Activated CD4-positive, alpha-beta T cell treated with anti-CD3 and anti-CD28 coated beads for 36 hours (primary cell): ENCODE measurements at regions of chr16 and their contacts with region 1.

Region 1: DNA sequence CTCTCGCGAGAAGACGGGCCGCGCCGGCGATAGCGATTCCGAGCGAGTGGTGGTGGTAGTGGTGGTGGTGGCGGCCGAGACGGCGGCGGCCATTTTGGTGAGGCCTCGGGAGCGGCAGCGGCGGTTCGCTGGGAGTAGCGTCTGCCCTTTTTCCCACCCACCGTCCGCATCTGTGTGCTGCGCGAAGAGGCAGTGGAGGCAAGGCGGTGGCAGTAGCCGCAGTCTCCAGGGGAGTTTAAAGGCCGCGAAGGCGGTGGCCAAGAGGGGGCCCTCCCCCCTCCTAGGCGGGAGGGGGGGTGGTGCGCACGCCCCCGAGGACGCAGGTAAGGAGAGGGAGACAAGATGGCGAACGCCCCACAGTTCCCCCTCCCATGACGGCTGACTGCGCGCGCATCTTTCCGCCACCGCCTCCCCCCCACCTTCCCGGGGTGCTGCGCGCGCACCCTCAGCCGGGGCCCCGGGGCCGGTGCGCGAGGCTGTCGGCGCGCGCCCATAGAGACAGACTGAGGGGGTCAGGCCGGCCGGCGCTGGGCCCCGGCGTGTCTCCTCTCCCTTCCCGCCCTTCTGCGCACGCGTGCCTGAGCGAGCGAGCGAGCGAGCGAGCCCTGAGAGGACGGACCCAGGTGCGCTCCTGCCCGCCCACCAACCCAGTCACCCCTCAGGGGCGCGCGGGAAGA is 694 bp upstream of the SRCAP start:
- DNase-seq: peak; percentile 100
- ATAC-seq: peak; percentile 75
- H3K4me3 Mint-ChIP-seq: peak overlapping the region; percentile 96
- H3K27ac Mint-ChIP-seq: peak overlapping the region; percentile 99
- H3K4me1 Mint-ChIP-seq: peaks cover 33% of the 10 kb centered on the region
- H3K27me3 Mint-ChIP-seq: no peaks in the 10 kb centered on the region

Region 2: DNA sequence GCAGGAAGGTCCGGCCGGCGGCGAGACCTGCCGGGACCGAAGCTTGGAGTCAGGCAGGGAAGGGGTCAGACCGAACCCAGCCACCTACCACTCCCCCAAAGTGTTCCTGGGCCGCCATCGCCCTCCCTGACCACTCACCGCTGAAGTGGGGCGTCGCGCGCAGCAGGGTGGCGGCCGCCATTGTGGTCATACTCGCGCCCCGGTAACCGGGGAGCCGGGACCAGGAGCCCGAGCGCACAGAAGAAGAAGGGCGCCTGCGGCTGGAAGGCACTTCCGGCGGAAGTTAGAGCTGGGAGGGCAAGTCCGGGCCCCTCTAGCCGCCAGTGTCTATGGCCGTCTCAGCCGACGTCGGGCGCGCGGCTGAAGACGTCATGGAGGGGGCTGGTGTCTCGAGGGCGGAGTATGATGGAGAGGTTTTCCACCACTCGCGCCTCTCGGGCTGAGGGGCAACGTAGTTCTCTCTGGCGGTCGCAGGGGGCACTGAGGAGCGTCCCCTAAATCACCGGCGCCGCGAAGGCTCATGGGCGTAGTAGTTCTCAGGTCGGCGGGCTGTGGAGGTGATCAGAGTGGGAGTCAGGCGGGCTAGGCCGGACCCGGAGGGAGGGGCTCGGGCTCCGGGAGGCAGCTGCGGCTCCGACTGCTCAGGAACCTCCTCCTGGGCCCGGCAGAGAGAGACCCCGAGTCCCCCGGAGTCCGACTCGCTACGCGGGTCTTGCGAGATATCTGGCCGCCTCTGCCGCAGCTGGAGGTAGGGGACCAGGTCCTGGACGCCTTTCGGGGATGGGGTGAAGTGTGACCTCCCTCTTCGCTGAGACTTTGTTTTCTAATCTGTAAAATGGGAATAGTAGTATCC is 1852.0 kb before region 1 on chr16 and contains the start of gene TUFM:
- CTCF ChIA-PET with region 1: no interaction called
- POLR2A ChIA-PET with region 1: no interaction called
- intact Hi-C with region 1: no loop called
- DNase-seq: peak; percentile 99
- ATAC-seq: peak; percentile 94
- H3K4me3 Mint-ChIP-seq: peak within 1 kb of the TSS; percentile 97
- H3K27ac Mint-ChIP-seq: peak within 1 kb of the TSS; percentile 97
- H3K4me1 Mint-ChIP-seq: peaks cover 23% of the 10 kb centered on the region
- H3K27me3 Mint-ChIP-seq: no peaks in the 10 kb centered on the region
- total RNA-seq, gene TUFM: 224 to 241 TPM

Region 3: DNA sequence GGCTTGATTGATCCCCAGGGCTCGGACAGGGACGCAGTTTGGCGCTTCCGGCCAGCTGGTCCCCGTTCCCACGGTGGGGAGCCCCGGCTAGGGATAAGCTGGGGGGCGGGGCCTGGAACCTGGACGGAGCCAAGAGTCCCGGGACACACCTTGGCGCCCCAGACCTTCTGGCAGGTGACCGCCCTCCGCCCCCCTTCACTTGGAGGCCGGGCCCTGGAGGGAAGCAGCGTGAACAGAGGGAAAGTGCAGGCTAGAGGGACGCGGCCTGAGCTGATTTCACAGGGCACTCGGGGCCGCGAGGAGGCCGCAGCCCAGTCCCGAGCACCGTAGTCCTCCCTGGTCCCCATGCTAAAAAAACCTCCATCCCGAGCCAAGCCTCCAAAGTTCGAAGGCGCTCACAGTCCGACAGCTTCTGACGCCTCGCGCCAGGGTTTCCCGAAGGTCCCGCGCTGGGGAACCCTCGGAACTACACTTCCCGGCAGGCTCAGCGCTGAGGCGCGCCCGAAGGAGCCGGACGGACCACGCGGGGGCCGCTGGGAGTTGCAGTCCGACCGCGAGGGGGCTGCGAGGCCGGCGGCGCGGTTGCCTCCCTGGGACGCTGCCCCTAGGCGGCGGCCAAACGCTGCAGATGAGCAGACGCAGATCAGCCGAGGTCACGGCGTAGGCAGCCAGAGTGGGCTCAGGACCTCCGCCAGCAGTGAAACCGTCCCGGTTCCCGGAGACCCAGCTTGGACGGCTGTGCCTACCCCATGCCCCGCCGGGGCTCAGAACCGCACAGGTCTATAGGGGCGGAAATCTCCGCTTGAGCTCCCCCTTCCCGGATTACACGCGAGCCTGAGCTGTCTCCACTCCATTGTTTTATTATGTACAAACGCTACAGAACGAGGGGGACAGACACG is 606.6 kb before region 1 on chr16 and contains the start of gene TBX6:
- CTCF ChIA-PET with region 1: interaction called, 3 read pairs
- POLR2A ChIA-PET with region 1: no interaction called
- intact Hi-C with region 1: loop called in 1 of 2 experiments (anchors 5 kb)
- DNase-seq: peak; percentile 97
- ATAC-seq: peak; percentile 83
- H3K4me3 Mint-ChIP-seq: peak within 1 kb of the TSS; percentile 84
- H3K27ac Mint-ChIP-seq: peak within 1 kb of the TSS; percentile 92
- H3K4me1 Mint-ChIP-seq: peaks cover 51% of the 10 kb centered on the region
- H3K27me3 Mint-ChIP-seq: no peaks in the 10 kb centered on the region
- total RNA-seq, gene TBX6: 2.7 to 3.0 TPM

Region 4: DNA sequence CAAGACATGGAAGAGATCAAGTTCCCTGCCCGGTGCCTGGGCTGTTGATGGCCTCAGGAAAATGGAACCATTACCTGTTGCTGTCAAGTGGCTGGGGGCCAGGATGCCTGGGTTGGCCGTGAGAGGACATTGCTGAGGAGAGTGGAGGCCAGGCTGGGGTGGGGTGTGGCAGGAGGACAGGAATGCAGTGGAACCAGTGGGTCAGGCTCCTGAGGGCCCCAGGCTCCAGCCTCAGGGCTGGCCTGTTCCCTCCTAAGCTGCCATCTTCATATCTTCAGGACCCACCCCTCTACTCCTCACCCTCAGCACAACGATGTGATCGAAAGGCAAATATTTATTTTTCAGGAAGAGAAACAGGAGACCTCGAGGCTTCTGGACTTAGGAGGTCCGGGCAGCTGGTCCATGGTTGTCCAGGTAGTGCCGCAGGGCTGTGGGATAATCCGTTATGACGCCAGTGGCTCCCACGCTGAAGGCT is 593.7 kb before region 1 on chr16:
- CTCF ChIA-PET with region 1: no interaction called
- POLR2A ChIA-PET with region 1: no interaction called
- intact Hi-C with region 1: no loop called
- DNase-seq: no peak
- ATAC-seq: no peak
- H3K4me3 Mint-ChIP-seq: no peak overlapping the region
- H3K27ac Mint-ChIP-seq: peak overlapping the region; percentile 72
- H3K4me1 Mint-ChIP-seq: no peaks in the 10 kb centered on the region
- H3K27me3 Mint-ChIP-seq: no peaks in the 10 kb centered on the region

Region 5: GRCh38 chr16:30472328-30472942 is 225.8 kb before region 1 on chr16 and contains the start of gene ITGAL:
- CTCF ChIA-PET with region 1: no interaction called
- POLR2A ChIA-PET with region 1: interaction called, 3 read pairs
- intact Hi-C with region 1: loop called in 1 of 2 experiments (anchors 1 kb)
- DNase-seq: peak; percentile 93
- ATAC-seq: peak; percentile 62
- H3K4me3 Mint-ChIP-seq: peak within 1 kb of the TSS; percentile 95
- H3K27ac Mint-ChIP-seq: peak within 1 kb of the TSS; percentile 99
- H3K4me1 Mint-ChIP-seq: peaks cover 63% of the 10 kb centered on the region
- H3K27me3 Mint-ChIP-seq: no peaks in the 10 kb centered on the region
- total RNA-seq, gene ITGAL: 210 to 222 TPM

Region 6: GRCh38 chr16:30609926-30610839 is 88.1 kb before region 1 on chr16 and contains the start of gene ZNF689:
- CTCF ChIA-PET with region 1: interaction called, 3 read pairs
- POLR2A ChIA-PET with region 1: interaction called, 3 read pairs
- intact Hi-C with region 1: loop called in 1 of 2 experiments (anchors 1 kb)
- DNase-seq: peak; percentile 96
- ATAC-seq: peak; percentile 88
- H3K4me3 Mint-ChIP-seq: peak within 1 kb of the TSS; percentile 80
- H3K27ac Mint-ChIP-seq: peak within 1 kb of the TSS; percentile 96
- H3K4me1 Mint-ChIP-seq: peaks cover 19% of the 10 kb centered on the region
- H3K27me3 Mint-ChIP-seq: no peaks in the 10 kb centered on the region
- total RNA-seq, gene ZNF689: 9.0 to 10.7 TPM

Region 7: GRCh38 chr16:30761928-30762810 is 63.9 kb after region 1 on chr16 and contains the starts of genes CFAP119 and RNF40:
- CTCF ChIA-PET with region 1: interaction called, 5 read pairs
- POLR2A ChIA-PET with region 1: no interaction called
- intact Hi-C with region 1: loop called in 1 of 2 experiments (anchors 1 kb)
- DNase-seq: peak; percentile 94
- ATAC-seq: peak; percentile 98
- H3K4me3 Mint-ChIP-seq: peak within 1 kb of the TSS; percentile 90
- H3K27ac Mint-ChIP-seq: peak within 1 kb of the TSS; percentile 83
- H3K4me1 Mint-ChIP-seq: peaks cover 25% of the 10 kb centered on the region
- H3K27me3 Mint-ChIP-seq: no peaks in the 10 kb centered on the region
- total RNA-seq, gene CFAP119: 1.7 to 3.1 TPM
- total RNA-seq, gene RNF40: 72.3 to 85.5 TPM

Region 8: DNA sequence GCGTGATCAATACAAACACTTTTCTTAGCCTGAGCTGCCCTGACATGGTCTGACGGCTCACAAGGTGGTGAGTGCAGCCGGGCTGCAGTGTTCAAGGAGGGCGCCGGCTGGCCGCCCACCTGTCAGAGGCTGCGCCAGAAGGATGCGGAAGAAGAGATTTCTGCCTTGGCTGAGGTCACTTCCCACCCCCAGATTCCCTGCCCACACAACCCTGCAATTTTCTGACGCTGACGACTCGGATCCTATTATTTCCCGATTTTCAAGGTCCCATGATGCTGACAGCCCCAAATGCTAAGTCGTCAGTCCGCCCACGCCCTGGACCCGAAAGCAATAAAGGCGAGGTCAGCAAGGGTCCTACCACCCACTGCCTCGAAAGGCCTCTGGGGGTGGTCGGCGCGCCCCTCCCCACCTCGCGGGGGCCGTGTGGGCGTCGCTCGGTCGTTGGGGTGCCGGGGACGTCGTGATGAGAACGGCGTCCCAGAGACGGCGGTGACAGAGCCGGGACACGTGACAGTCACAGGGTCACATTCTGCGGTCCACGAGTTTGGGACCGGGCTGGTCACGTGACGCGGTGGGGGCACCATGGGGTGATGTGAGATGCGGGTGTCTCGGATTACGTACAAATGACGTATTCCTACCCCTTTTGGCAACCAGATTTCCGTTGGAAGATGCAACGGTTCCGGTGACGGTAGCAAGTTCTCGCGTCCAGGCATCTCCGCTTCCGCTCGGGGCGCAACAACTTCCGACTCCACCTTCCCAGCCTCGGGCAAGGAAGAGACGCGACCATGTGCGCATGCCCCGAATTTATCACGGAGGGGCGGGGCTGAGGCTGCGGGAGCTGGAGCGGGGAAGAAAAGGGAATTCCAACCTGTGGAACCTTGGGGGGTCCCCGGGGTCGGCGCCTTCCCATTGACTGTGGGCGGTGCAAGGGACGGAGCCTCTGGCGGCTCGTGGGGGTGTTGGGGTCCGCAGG is 334.7 kb after region 1 on chr16 and contains the start of gene STX4:
- CTCF ChIA-PET with region 1: no interaction called
- POLR2A ChIA-PET with region 1: no interaction called
- intact Hi-C with region 1: loop called in 1 of 2 experiments (anchors 1 kb)
- DNase-seq: peak; percentile 99
- ATAC-seq: peak; percentile 89
- H3K4me3 Mint-ChIP-seq: peak within 1 kb of the TSS; percentile 96
- H3K27ac Mint-ChIP-seq: peak within 1 kb of the TSS; percentile 93
- H3K4me1 Mint-ChIP-seq: peaks cover 15% of the 10 kb centered on the region
- H3K27me3 Mint-ChIP-seq: no peaks in the 10 kb centered on the region
- total RNA-seq, gene STX4: 29.2 to 35.9 TPM